Dorsolateral prefrontal cortex (tissue), 120 donors: ENCODE measurements at regions of chr4 and their contacts with region 1.

Region 1: DNA sequence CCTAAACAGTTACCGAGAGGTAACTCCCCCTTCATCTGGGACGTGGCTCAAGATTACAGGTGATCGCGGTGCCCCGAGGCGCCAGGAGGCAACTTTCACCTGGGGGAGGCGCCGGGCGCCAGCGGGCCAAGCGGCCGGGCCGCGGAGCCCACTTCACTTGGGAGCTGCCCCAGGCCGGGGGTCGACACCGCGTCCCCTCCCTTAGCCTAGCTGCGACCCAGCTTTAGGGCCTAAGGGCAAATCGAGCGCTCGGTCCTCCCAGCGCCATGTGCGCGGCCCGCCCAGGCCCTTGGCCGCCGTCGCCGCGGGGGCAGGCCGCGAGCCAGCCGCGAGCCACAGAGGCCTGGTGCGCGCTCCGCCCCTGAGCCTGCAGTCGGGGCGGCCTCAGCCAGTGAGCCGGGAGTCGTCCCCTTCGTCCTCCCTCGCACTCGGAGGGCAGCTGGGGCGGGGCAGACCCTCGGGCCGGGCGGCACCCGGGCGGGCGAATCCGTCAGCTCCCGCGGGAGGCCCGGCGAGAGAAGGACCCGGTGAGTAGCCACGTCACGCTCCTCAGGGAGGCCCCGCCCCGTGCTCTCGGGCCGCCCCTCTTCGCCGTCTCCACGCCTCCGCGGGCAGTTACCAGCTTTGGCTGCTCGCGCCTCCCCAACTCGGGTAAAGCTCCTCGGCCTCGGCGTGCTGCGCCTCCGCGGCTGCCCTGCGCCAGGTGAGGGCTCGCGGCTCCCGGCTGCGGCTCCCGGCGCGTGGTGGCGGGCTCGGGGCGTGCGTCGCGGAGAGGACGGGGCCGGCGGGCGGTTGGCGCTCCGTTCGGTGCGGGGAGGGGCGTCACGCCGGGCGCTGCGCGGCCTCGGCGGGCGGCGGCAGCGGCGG is at the start of gene LARP1B:
- DNase-seq: peak; percentile 81 to 96 (median 92)
- H3K4me3 ChIP-seq: peak within 1 kb of the TSS; percentile 50 to 94 (median 82)
- H3K27ac ChIP-seq: peak within 1 kb of the TSS; percentile 48 to 96 (median 91)
- H3K27me3 ChIP-seq: no peaks in the 10 kb centered on the region
- CTCF ChIP-seq: peak in 11 of 56 donors; percentile 3 to 49 (median 15)
- total RNA-seq, gene LARP1B: 24.4 to 41.8 (median 32.1) TPM

Region 2: DNA sequence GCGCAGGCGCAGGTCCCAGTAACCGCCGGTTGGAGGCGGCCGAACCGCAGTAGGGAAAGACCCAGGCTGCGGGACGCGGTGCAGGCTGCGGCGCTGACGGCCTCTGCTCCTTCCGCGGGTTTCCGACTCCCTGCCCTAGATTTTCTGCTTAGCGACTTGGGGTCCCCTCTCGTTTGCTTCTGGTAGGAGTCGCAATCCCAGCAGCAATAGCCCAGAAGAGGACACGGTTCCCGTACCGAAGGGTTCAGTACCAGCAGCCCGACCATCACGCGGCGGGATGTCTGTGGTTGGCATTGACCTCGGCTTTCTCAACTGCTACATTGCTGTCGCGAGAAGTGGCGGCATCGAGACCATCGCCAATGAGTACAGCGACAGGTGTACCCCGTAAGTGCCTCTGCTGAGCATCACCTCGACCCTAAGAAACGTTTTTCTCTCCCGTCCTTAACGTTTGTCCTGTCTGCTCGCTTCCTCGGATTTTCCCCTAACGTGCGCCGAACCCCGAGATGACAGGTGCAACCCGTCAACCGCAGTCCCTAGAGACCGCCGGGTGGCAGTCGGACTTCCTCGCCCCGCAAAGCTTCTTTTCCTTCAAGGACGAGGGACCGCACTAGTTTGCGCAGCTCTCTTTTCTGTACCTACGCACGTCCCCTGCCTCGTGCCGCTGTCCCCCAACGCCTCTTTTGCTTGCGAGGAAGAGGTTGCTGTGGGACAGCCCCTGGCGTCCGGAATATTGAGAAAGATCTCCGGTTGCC is 278.5 kb before region 1 on chr4 and contains the start of gene HSPA4L:
- intact Hi-C with region 1: loop called (anchors 2 to 5 kb)
- DNase-seq: peak; percentile 48 to 77 (median 66)
- H3K4me3 ChIP-seq: peak within 1 kb of the TSS; percentile 68 to 94 (median 82)
- H3K27ac ChIP-seq: peak within 1 kb of the TSS; percentile 11 to 97 (median 89)
- H3K27me3 ChIP-seq: no peaks in the 10 kb centered on the region
- CTCF ChIP-seq: peak in 42 of 56 donors; percentile 4 to 59 (median 34)
- total RNA-seq, gene HSPA4L: 22.6 to 133 (median 58.3) TPM

Region 3: DNA sequence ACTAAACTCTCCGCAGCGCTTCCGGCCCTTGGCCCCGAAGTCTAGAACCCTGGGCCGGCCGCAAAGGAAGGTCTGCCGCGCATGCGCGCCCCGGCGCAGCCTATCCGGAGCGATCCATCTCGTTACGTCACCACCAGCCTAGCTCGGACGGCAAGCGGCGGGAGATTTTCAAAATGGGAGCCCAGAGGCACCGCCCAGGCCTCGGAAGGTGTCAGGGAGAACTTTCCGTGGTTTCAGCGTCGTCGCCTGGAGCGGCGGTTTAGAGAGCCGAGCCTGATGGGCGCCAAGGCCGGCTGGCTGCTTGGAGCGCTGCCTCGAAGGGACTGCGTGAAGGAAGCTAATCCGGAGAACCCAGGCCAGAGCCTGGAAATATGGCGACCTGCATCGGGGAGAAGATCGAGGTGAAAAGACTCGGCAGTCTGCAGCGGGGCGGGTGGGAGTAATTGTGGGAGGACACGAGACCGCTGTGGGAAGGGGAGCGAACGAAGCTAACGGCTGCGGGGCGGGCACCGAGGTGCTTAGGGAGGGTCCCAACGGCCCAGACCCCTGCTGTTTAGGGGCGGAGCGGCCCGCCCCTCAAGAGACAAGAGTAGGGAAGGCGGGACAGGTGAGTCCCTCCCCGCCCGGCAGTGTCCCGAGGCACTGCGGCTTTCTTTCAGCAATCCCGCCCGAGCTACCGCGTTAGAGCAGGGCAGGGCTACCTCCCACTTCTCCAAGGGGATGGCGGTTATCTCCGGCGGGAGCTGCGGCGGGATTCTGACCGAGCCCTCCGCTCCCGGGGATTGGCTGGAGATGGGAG is 180.0 kb before region 1 on chr4 and contains the start of gene PLK4:
- intact Hi-C with region 1: loop called in 1 of 2 experiments (anchors 5 kb)
- DNase-seq: peak; percentile 85 to 96 (median 90)
- H3K4me3 ChIP-seq: peak within 1 kb of the TSS; percentile 56 to 97 (median 85)
- H3K27ac ChIP-seq: peak within 1 kb of the TSS in 46 of 59 donors; percentile 10 to 85 (median 62)
- H3K27me3 ChIP-seq: no peaks in the 10 kb centered on the region
- CTCF ChIP-seq: peak in 8 of 56 donors; percentile 10 to 32 (median 17)
- total RNA-seq, gene PLK4: 0.57 to 6.0 (median 2.2) TPM

Region 4: DNA sequence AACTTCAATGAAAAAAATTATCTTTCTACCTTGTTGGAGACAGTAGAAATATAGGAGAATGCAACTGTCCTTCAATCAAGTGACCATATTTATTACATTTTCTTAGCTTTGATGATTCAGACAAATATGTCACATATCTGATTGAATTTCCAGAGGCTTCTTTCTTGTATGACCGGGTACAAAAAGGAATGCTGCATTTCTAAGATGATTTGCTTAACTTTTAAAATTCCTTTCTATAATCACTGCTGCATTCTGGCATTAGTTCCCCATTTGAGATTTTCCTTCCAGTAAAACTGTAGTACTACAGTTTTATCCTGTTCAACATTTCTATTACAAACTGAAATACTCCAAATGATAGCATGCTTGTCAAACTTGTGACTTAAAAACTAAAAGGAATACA is 101.1 kb before region 1 on chr4:
- intact Hi-C with region 1: loop called (anchors 2 to 5 kb)
- DNase-seq: no peak
- H3K4me3 ChIP-seq: no peak overlapping the region
- H3K27ac ChIP-seq: no peak overlapping the region
- H3K27me3 ChIP-seq: no peaks in the 10 kb centered on the region
- CTCF ChIP-seq: no peak

Region 5: DNA sequence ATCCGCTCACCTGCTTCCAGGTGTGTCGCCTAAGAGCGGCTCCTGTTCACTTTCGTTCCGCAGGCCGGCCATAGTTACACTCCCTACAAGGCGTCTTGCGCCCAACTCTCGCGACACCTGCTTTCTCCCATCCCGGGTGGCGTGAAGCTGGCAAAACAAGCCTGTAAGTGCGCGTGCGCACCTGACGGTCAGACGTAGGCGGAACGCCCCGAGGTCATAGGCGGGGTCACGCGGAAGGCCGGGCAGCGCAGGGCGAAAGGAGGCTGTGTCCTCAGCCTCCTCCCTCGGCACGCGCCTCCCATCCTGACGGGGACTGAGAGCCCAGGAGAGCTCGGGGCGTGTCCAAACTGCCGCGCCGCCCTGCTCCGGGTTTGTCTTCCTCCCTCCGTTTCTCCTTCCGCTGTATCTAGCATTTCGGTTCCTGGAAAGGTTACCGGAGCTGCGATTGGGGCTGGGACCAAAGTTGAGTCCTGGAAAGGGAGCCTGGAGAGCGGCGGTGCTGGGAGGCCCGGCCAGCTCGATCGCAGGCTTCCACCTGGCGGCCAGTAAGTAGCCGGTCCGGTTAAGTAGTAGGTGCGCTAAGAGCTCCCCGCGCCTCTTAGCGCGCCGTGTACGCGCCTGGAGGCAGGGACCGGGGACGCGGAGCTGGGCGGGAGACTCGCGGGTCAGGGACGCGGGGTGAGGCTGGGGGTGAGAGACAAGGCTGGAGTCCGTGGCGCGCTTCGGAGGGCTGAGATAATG is 95.7 kb before region 1 on chr4 and contains the starts of genes ABHD18 and MFSD8:
- intact Hi-C with region 1: loop called (anchors 2 to 5 kb)
- DNase-seq: peak; percentile 84 to 97 (median 94)
- H3K4me3 ChIP-seq: peak within 1 kb of the TSS; percentile 69 to 99 (median 93)
- H3K27ac ChIP-seq: peak within 1 kb of the TSS; percentile 42 to 96 (median 87)
- H3K27me3 ChIP-seq: no peaks in the 10 kb centered on the region
- CTCF ChIP-seq: peak in 35 of 56 donors; percentile 4 to 53 (median 28)
- total RNA-seq, gene ABHD18: 9.0 to 22.8 (median 15.7) TPM
- total RNA-seq, gene MFSD8: 12.6 to 42.3 (median 25.9) TPM

Region 6: GRCh38 chr4:128130621-128131020 is 69.7 kb after region 1 on chr4:
- intact Hi-C with region 1: no loop called
- DNase-seq: no peak
- H3K4me3 ChIP-seq: no peak overlapping the region
- H3K27ac ChIP-seq: no peak overlapping the region
- H3K27me3 ChIP-seq: no peaks in the 10 kb centered on the region
- CTCF ChIP-seq: no peak

Region 7: GRCh38 chr4:128287871-128288688 is 227.1 kb after region 1 on chr4:
- intact Hi-C with region 1: loop called (anchors 5 to 10 kb)
- DNase-seq: peak; percentile 97 to 98 (median 98)
- H3K4me3 ChIP-seq: peak overlapping the region; percentile 71 to 99 (median 85)
- H3K27ac ChIP-seq: peak overlapping the region; percentile 67 to 98 (median 92)
- H3K27me3 ChIP-seq: no peaks in the 10 kb centered on the region
- CTCF ChIP-seq: peak in 39 of 56 donors; percentile 5 to 53 (median 33)

Region 8: DNA sequence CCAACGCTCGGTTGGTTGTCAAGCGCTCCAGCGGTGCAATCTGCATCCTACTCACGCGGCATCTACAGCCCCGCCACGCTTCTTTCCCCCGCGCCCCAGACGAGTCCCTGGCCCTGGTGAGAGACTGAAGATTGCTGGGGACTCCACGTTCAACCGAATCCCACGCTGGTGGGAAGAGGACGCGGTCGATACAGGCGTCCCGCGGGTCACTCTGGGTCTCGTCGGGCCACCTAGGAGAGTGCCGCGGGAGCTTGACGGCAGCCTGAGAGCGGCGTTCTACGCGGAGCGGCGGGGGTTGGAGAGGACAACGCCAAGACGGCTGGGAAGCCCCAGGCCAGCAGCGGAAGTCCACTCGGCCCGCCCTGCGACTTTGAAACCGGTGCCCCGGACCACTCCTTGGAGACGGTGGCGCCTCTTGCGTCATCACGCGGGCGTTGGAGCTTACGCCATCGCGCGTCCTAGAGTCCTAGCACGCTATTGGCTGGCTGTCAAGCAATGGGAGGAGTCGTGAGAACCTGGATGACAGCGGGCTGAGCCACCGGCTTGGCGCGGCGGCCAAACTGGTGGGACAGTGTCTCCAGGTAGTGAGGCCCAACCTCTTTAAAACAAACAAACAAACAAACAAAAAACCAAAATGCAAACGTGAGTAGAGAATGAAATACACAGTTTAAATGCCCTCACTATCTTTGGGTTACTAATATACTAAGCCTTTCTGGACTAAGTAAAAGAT is 1032.4 kb after region 1 on chr4 and contains the start of gene SCLT1:
- intact Hi-C with region 1: loop called in 1 of 2 experiments (anchors 10 kb)
- DNase-seq: peak; percentile 95 to 99 (median 98)
- H3K4me3 ChIP-seq: peak within 1 kb of the TSS; percentile 56 to 98 (median 85)
- H3K27ac ChIP-seq: peak within 1 kb of the TSS; percentile 16 to 98 (median 91)
- H3K27me3 ChIP-seq: no peaks in the 10 kb centered on the region
- CTCF ChIP-seq: peak in 20 of 56 donors; percentile 3 to 33 (median 17)
- total RNA-seq, gene SCLT1: 14.7 to 32.2 (median 21.4) TPM